Posterior cingulate gyrus (tissue), 11 donors: ENCODE measurements at regions of chr17 and their contacts with region 1.

Region 1: DNA sequence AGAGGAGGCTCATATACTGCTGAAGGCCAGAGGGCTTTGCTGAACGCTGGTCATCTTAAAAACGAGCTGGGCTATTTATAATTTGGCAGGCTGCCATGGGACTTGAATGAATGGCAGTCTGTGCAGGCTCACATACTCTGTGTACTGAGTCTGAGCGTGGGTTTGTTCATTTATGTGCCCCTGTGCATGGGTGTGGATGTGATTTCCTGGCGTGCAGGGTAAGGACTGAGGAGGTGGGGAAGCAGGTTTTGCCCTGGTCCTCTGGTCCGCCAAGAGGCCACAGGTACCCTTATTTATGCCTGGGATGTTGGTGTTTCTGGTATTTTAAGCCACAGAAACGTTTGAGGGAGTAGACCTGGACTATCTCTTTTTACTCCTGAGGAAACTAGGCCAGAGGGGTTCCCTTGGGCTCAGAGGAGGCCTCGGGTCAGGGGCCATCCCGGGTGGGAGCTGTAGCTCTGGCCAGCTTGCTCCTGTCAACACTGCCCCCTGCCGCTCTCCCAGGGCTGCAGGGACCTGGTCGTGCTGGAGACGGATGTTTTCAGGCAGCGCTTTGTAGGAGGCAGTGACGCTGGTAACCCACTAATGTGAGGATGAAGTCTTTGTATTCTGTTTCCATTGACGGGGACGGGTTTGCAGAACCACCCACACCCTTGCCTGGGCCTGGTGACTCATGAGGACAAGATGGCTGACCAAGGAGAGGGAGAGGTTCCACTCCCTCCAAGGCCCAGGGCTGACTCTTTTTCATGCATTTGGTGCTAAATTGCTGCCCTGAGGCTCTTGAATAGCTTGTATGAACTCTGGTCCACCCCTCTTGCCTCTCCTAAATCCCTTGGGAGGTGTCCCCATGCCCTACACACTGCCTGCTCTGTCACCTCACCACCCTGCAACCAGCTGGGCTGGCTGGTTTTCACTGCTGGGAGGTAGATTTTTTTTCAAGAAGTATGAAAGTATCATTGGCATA is 184.5 kb downstream of the MSI2 start:
- DNase-seq: peak; percentile 45 to 95 (median 69)

Region 2: DNA sequence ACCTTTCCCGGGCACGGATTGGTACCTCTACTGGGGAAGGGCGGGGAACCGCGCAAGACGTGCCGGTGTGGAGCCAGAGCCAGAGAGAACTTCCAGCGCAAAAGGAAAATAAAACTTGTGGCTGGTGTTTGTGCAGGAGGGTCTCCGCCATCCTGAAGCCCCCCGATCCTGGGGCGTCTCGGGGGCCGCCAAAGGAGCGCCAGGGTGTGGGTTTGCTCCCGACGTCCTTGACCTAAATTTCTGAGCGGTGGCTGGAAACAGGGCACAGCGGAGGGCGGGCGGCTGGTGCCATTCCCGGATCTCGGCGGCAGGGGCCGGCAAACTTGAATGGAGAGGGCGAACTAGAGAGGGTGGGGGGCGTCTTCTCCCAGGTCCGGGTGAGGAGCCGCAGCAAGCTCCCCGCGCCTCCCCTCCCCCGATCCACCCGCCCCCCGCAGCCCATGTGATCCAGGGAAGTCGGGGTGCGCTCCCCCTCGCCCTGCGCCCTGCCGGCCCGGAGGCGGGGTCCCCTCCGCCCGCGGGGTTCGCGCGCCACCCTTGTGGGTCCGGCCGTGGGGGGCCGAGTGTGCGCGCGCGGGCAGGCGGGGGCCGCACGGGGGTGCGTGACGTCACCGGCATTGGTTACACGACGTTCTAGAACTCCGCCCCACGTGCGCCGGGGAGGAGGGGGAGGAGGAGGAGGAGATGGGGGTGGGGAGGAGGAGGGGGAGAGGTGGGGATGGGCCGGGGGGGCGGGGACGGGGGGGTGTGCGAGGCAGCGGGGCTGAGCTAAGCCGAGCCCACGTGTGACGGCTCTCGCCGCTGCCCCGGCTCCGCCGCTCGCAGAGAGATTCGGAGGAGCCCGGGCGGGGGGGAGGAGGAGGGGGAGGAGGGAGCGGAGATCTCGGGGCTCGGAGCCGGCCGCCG is 184.8 kb before region 1 on chr17 and contains the start of gene MSI2:
- intact Hi-C with region 1: loop called (anchors 10 kb)
- DNase-seq: peak; percentile 82 to 98 (median 88)

Region 3: GRCh38 chr17:57415751-57416207 is 25.0 kb before region 1 on chr17:
- intact Hi-C with region 1: no loop called
- DNase-seq: no peak

Region 4: DNA sequence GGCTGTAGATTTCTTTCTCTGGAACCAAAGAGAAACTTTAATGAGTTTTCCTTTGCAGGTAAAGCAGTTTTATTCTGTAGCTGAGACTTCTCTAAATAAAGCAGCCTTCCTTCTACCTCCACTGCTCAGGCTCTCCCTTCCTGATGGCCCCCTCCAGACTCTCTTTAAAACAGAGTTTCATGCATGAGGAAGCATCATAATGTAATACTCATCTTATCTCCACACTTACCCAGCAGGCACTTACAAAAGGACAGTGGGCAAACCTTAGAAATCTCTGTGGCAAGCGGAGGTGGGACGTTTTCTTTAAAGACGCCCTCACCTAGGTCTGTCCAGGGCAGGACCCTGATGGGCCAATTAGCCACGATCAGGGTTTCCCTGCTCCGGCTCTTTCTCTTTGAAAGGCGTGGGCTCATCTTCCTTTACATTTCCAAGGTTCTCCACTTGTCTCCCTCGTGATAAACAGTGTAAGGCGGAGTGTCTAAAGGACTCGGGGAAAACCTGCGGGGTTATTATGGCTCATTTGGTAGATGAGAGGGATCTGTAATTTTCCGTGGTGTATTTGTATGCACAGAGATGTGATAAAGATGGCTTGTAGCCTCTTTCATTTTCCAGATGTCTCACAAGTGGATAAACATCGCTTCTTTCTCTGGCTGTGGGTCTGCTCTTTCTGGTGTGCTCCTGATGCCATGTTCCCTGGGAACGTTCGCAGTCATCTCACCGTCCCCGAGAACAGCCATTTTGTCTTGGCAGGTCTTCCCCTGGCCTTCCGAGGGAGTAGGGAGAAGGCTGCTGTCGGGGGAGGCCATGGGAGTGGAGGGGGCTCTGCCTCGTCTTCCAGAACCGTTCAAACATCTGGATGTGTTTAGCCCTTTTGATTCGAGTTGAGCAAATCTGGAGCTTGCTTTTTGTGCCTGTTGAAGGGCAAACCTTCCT is 65.3 kb after region 1 on chr17:
- intact Hi-C with region 1: no loop called
- DNase-seq: no peak

Region 5: GRCh38 chr17:57577751-57578607 is 137.2 kb after region 1 on chr17:
- intact Hi-C with region 1: loop called (anchors 10 kb)
- DNase-seq: peak in 1 of 10 donors; percentile 38

Region 6: GRCh38 chr17:57597531-57598453 is 157.0 kb after region 1 on chr17:
- intact Hi-C with region 1: no loop called
- DNase-seq: peak in 9 of 10 donors; percentile 51 to 96 (median 78)

Region 7: DNA sequence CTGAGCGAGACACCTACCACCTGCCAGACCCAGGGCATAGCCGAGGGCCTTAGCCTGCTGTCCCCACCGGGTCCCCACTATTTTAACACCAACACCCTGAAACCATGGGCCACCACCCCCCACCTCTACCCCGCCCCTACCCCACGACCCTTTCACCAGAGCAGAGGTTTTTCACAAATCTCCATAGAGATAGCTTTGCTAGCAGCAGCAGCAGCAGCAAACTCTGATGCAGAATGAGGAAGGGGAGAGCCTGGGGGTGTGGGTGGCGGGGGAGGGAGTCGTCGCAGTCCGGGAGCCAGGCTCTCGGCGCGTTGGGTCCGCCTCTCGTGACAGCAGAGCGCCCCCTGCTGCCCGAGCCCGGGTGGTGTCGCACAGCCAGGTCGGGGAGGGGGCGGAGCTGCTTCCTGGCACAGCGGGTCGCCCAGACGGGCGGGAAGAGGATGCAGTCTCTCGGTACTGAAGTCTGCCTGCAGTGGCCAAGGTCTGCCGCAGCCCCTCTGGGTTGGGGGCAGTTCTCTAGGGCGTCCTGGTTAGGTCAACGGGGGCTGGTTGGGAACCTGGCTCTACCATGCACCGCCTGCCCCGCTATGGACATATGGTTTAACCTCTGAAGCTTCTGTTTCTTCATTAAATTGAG is 342.4 kb after region 1 on chr17:
- intact Hi-C with region 1: no loop called
- DNase-seq: peak; percentile 45 to 95 (median 73)